Panc1 (cell line): ENCODE measurements at regions of chr7 and their contacts with region 1.

Region 1: DNA sequence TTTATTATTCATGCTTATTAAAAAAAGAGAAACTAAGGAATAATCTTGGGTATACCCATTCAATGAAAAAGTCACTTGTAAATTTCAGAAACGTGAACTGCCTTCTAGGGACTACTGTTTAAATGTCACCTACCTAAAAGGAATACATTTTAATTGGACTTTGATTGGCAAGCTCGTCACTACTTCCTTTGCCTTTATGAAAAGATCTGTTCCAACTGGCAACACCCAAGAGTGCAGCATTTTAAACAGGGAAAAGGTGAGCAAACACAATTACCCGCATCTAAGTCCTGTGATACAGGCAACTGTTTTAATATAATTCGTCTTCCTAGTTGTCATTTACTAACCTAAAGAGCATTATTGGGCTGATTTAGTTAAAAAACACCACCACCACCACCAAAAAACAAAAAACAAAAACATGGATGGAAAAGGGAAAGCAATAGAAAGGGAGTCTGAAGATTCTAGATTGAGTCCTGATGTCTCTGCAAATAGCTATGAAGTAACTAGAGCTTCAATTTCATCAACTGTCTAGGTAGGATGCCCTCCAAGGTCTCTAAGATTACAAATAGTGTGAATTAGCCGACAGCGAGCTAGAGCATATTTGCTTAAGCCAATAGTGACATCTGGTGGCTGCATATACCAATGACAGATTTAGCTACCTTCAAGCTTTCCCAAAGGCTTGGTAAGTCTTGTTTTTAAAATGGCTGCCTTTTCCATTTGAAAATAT is 33.8 kb upstream of the ICA1 start:
- DNase-seq: peak; percentile 81
- ATAC-seq: peak; percentile 99
- H3K4me3 ChIP-seq: no peak overlapping the region
- H3K27ac ChIP-seq: no peak overlapping the region
- H3K4me1 ChIP-seq: no peaks in the 10 kb centered on the region
- H3K27me3 ChIP-seq: peaks cover 7% of the 10 kb centered on the region; the same call in 1 of the 2 replicates
- CTCF ChIP-seq: peak; percentile 82

Region 2: GRCh38 chr7:7595451-7595850 is 700.3 kb before region 1 on chr7:
- CTCF ChIA-PET with region 1: no interaction called
- POLR2A ChIA-PET with region 1: no interaction called
- in situ Hi-C with region 1: no loop called
- intact Hi-C with region 1: loop called (anchors 10 kb)
- DNase-seq: peak; percentile 15
- ATAC-seq: 0 out of 2 replicates have a peak, but pooled peaks have one; percentile 60
- H3K4me3 ChIP-seq: no peak overlapping the region
- H3K27ac ChIP-seq: no peak overlapping the region
- H3K4me1 ChIP-seq: no peaks in the 10 kb centered on the region
- H3K27me3 ChIP-seq: no peaks in the 10 kb centered on the region
- CTCF ChIP-seq: no peak

Region 3: GRCh38 chr7:8109196-8110022 is 186.4 kb before region 1 on chr7:
- CTCF ChIA-PET with region 1: no interaction called
- POLR2A ChIA-PET with region 1: no interaction called
- in situ Hi-C with region 1: no loop called
- intact Hi-C with region 1: no loop called
- DNase-seq: no peak
- ATAC-seq: no peak
- H3K4me3 ChIP-seq: no peak overlapping the region
- H3K27ac ChIP-seq: no peak overlapping the region
- H3K4me1 ChIP-seq: no peaks in the 10 kb centered on the region
- H3K27me3 ChIP-seq: no peaks in the 10 kb centered on the region; the same call in 1 of the 2 replicates
- CTCF ChIP-seq: no peak

Region 4: DNA sequence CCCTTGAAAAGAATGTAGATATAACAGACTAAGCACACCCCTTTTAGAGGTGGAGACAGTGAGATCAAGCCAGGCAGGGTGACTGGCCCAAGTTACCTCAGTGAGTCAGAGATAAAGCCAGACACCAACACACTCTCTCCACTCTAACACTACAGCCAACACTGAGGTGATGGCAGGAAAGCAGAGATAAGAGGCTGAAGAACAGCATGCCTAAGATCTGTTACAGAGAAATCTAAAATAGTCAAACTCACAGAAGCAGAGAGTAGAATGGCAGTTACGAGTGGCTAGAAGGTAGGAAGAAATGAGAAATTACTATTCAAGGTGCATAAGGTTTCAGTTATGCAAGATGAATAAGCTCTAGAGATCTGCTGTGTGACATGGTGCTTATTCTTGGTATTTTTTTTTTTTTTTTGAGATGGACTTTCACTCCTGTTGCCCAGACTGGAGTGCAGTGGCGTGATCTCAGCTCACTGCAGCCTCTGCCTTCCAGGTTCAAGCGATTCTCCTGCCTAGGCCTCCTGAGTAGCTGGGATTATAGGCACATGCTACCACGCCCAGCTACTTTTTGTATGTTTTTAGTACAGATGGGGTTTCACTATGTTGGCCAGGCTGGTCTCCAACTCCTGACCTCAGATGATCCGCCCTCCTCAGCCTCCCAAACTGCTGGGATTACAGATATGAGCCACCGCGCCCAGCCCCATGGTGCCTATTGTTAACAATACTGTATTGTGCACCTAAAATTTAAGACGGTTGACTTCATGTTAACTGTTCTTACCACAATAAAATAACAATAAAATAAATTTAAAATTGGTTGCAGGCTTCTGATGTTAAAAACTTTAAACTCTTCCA is 62.6 kb before region 1 on chr7:
- CTCF ChIA-PET with region 1: no interaction called
- POLR2A ChIA-PET with region 1: no interaction called
- in situ Hi-C with region 1: no loop called
- intact Hi-C with region 1: no loop called
- DNase-seq: no peak
- ATAC-seq: no peak
- H3K4me3 ChIP-seq: no peak overlapping the region
- H3K27ac ChIP-seq: no peak overlapping the region
- H3K4me1 ChIP-seq: no peaks in the 10 kb centered on the region
- H3K27me3 ChIP-seq: peaks cover 5% of the 10 kb centered on the region; the same call in 1 of the 2 replicates
- CTCF ChIP-seq: no peak

Region 5: DNA sequence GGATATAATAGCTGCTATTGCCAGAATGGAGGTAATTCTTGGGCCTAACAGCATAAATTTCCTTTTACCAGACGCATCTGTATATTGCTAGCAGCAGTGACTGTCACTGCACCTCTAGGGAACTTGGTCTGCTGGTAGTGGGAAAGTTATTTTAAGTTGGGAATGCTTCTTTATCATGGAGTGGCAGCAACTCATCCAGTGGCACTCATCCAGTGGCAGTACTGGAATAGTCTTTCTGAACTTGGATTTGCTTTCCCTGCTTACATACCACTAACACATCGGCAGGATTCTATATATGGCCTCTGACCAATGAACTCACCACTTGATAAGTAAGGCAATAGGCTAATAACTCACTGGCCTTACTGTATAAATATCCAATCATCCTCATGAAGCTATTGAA is 11.8 kb before region 1 on chr7:
- CTCF ChIA-PET with region 1: no interaction called
- POLR2A ChIA-PET with region 1: no interaction called
- in situ Hi-C with region 1: no loop called
- intact Hi-C with region 1: no loop called
- DNase-seq: no peak
- ATAC-seq: no peak
- H3K4me3 ChIP-seq: no peak overlapping the region
- H3K27ac ChIP-seq: no peak overlapping the region
- H3K4me1 ChIP-seq: no peaks in the 10 kb centered on the region
- H3K27me3 ChIP-seq: no peaks in the 10 kb centered on the region
- CTCF ChIP-seq: no peak